CD14-positive monocyte (primary cell): ENCODE measurements at regions of chr4 and their contacts with region 1.

Region 1: GRCh38 chr4:25439918-25440477 is 62.9 kb downstream of the ANAPC4 start:
- DNase-seq: peak; percentile 30 to 53 (median 40)
- H3K4me3 ChIP-seq: no peak overlapping the region
- H3K4me3 Mint-ChIP-seq: no peak overlapping the region
- H3K27ac ChIP-seq: no peak overlapping the region
- H3K27ac Mint-ChIP-seq: no peak overlapping the region
- H3K4me1 ChIP-seq: no peaks in the 10 kb centered on the region
- H3K4me1 Mint-ChIP-seq: no peaks in the 10 kb centered on the region
- H3K27me3 ChIP-seq: no peaks in the 10 kb centered on the region
- H3K27me3 Mint-ChIP-seq: peaks cover 0 to 6% (median 2%) of the 10 kb centered on the region in 3 donors
- CTCF ChIP-seq: peak; percentile 93

Region 2: GRCh38 chr4:25484243-25484721 is 44.3 kb after region 1 on chr4:
- intact Hi-C with region 1: no loop called
- DNase-seq: no peak
- H3K4me3 ChIP-seq: no peak overlapping the region
- H3K4me3 Mint-ChIP-seq: no peak overlapping the region
- H3K27ac ChIP-seq: no peak overlapping the region
- H3K27ac Mint-ChIP-seq: no peak overlapping the region
- H3K4me1 ChIP-seq: no peaks in the 10 kb centered on the region
- H3K4me1 Mint-ChIP-seq: no peaks in the 10 kb centered on the region
- H3K27me3 ChIP-seq: no peaks in the 10 kb centered on the region
- H3K27me3 Mint-ChIP-seq: peaks cover 0 to 4% (median 3%) of the 10 kb centered on the region in 3 donors
- CTCF ChIP-seq: no peak

Region 3: GRCh38 chr4:25767877-25768725 is 328.1 kb after region 1 on chr4:
- intact Hi-C with region 1: loop called (anchors 5 kb)
- DNase-seq: peak; percentile 15 to 47 (median 32)
- H3K4me3 ChIP-seq: no peak overlapping the region
- H3K4me3 Mint-ChIP-seq: no peak overlapping the region
- H3K27ac ChIP-seq: no peak overlapping the region
- H3K27ac Mint-ChIP-seq: no peak overlapping the region
- H3K4me1 ChIP-seq: no peaks in the 10 kb centered on the region
- H3K4me1 Mint-ChIP-seq: peaks cover 4% of the 10 kb centered on the region
- H3K27me3 ChIP-seq: no peaks in the 10 kb centered on the region
- H3K27me3 Mint-ChIP-seq: peaks cover 0 to 1% (median 1%) of the 10 kb centered on the region in 3 donors
- CTCF ChIP-seq: peak; percentile 75